Posterior vena cava (tissue), 2 donors: ENCODE measurements at regions of chr2 and their contacts with region 1.

Region 1: GRCh38 chr2:117949806-117950205 is 64.1 kb downstream of the CCDC93 start:
- DNase-seq: no peak

Region 2: GRCh38 chr2:117888897-117889296 is 60.9 kb before region 1 on chr2:
- intact Hi-C with region 1: no loop called
- DNase-seq: no peak

Region 3: DNA sequence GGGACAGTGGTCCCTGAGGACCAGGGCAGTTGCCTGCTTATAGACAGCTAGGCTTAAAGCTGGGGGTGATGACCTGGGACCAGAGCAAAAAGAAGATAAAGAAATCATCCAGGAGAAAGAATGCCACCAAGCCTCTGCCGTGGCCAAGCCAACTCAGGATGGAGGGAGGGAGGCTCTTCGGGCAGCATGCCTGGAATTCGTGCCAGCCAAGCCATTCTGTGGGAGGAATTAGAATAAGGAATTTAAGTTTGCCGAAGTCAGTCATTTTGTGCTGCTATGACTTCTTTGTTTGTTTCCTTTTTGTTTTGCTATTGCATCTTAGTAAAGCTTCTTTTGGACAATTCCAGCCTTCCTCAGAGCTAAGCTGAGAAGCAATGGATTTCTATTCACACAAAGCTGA is 773.6 kb after region 1 on chr2:
- intact Hi-C with region 1: loop called in 1 of 2 experiments (anchors 5 kb)
- DNase-seq: no peak